ENCODE measurements at regions of chr7 and their contacts with region 1.

Region 1: GRCh38 chr7:6637544-6638229 is 569 bp downstream of the ZNF316 start:
- DNase-seq: peak in 1 of 2 experiments; percentile 65
- H3K4me3 ChIP-seq: peak overlapping the region; percentile 71
- H3K27ac ChIP-seq: no peak overlapping the region
- H3K4me1 ChIP-seq: peaks cover 21% of the 10 kb centered on the region
- H3K27me3 ChIP-seq: no peaks in the 10 kb centered on the region
- CTCF ChIP-seq: peak; percentile 58

Region 2: GRCh38 chr7:6139189-6139996 is 498.3 kb before region 1 on chr7:
- CTCF ChIA-PET with region 1: no interaction called
- POLR2A ChIA-PET with region 1: interaction called, 15 read pairs
- intact Hi-C with region 1: no loop called
- DNase-seq: no peak
- H3K4me3 ChIP-seq: no peak overlapping the region
- H3K27ac ChIP-seq: no peak overlapping the region
- H3K4me1 ChIP-seq: no peaks in the 10 kb centered on the region
- H3K27me3 ChIP-seq: no peaks in the 10 kb centered on the region
- CTCF ChIP-seq: no peak

Region 3: DNA sequence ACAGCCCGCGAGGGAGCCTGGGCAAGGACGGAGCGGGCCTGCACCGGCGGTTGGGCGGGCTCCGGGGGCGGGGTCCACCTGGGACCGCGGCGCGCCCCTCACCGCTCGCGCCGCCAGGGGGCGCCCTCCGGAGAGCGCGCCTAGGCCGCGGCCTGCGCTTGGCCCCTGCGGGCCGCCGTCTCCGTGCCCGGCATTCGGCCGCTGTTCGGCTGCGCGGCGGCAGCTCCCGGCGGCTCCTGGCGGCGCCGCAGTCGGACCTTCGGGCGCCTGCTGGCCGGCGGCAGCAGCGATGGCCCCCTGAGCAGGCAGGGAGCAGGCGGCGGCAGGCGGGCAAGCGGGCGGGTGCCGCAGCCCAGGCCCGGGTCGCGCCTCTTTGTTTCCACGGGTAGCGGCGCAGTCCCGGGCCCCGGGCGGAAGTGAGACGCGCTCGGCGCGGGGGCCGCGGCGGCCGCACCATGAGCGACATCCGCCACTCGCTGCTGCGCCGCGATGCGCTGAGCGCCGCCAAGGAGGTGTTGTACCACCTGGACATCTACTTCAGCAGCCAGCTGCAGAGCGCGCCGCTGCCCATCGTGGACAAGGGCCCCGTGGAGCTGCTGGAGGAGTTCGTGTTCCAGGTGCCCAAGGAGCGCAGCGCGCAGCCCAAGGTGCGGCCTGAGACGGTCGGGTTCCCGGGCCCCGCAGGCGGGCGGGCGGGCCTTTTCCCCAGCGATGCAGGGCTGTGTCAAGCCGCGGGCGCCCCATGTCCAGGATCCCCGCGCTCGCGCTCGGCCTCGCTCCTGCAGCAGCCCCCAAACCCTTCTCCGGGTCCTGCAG is 47.6 kb before region 1 on chr7 and contains the start of gene INTS15:
- CTCF ChIA-PET with region 1: no interaction called
- POLR2A ChIA-PET with region 1: interaction called, 18 read pairs
- intact Hi-C with region 1: loop called (anchors 1 kb)
- DNase-seq: peak; percentile 52 to 90
- H3K4me3 ChIP-seq: peak within 1 kb of the TSS; percentile 92
- H3K27ac ChIP-seq: no peak within 1 kb of the TSS
- H3K4me1 ChIP-seq: peaks cover 13% of the 10 kb centered on the region
- H3K27me3 ChIP-seq: no peaks in the 10 kb centered on the region
- CTCF ChIP-seq: no peak; the same call in 1 of the 2 replicates
- total RNA-seq, gene INTS15: 21.4 and 28.7 TPM in 2 replicates